ENCODE measurements at regions of chr12 and their contacts with region 1.

Region 1: DNA sequence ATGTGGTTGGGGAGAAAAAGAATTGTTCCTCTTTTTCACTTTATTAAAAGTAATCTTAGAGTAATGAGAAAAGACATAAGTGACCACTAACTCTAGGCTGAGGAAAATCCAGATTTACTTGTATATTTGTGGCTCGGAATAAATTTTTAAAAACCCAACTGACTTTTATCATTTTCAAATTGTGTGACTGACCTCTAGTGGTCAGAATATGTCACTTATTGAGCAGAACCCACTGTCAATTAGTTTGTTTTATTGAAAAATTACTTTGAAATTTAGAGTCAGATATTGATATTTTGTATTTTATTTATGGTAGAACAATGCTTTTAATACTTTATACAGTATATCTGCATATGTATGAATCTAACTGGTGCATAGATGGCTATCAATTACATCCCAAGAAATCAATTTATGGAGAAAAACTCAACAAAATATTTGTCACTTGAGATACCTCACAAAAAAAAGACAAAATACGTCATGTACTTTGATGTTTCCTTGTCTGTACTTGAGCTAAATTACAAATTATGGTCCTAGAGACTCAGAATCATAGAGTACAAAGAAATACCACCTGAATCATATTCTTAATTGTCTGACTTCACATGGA is 229.4 kb downstream of the CNTN1 start:
- DNase-seq: no peak
- ATAC-seq: no peak
- H3K4me3 ChIP-seq: no peak overlapping the region
- H3K4me1 ChIP-seq: no peaks in the 10 kb centered on the region
- CTCF ChIP-seq: peak; percentile 23

Region 2: DNA sequence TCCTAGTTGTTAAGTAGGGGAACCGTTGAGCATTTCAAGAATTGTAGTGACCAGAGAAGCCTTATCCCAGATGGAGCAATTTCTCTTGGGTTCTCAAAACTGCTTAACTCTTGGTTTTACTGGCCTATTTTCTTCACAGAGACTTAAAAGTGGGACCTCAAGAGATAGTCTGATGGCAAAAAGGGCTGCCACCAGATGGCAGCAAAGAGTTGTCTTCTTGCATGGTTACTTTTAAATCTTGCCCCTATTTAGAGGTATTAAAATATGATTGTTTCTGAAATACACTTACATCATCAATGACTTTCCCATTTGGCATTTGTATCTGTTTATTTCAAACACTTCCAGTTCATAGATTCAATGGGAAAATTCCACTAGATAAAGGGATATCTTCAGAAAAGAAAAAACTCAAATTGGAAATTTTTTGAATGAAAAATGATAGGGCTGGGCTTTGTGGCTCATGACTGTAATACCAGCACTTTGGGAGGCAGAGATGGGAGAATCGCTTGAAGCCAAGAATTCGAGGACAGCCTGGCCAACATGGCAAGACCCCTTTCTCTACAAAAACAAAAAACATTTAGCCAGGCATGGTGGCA is 299.3 kb before region 1 on chr12:
- intact Hi-C with region 1: loop called (anchors 5 kb)
- DNase-seq: peak in 2 of 3 donors; percentile 22 to 80
- ATAC-seq: no peak
- H3K4me3 ChIP-seq: no peak overlapping the region
- H3K4me1 ChIP-seq: no peaks in the 10 kb centered on the region
- CTCF ChIP-seq: no peak

Region 3: DNA sequence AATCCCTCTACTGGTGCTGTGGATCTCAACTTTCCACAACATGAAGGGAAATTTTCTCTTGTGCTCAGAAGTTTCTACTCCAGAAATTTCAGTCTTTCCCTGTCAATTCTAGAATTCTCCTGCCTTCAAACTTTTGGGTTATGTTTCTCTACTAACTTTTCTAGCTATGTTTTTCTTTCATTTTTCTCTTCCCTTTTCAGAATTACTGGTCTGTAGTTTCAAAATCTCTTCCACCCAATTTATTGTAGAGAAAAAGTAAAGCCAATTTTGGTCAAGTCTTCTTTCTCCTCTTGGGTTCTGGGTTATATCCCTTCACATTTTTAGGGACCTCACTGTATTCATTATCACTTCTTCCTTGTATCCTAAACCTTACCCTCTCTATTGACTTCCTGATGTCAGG is 210.5 kb before region 1 on chr12:
- intact Hi-C with region 1: no loop called
- DNase-seq: no peak
- ATAC-seq: no peak
- H3K4me3 ChIP-seq: no peak overlapping the region
- H3K4me1 ChIP-seq: no peaks in the 10 kb centered on the region
- CTCF ChIP-seq: no peak

Measured in mucosa of descending colon (tissue), 3 donors.